Panc1 (cell line): ENCODE measurements at regions of chr1 and their contacts with region 1.

Region 1: GRCh38 chr1:97820470-97821188 is 100.2 kb downstream of the DPYD start:
- DNase-seq: peak; percentile 7
- ATAC-seq: no peak
- H3K4me3 ChIP-seq: no peak overlapping the region
- H3K27ac ChIP-seq: no peak overlapping the region
- H3K4me1 ChIP-seq: no peaks in the 10 kb centered on the region
- H3K27me3 ChIP-seq: no peaks in the 10 kb centered on the region
- CTCF ChIP-seq: peak; percentile 42; the same call in 1 of the 2 replicates

Region 2: DNA sequence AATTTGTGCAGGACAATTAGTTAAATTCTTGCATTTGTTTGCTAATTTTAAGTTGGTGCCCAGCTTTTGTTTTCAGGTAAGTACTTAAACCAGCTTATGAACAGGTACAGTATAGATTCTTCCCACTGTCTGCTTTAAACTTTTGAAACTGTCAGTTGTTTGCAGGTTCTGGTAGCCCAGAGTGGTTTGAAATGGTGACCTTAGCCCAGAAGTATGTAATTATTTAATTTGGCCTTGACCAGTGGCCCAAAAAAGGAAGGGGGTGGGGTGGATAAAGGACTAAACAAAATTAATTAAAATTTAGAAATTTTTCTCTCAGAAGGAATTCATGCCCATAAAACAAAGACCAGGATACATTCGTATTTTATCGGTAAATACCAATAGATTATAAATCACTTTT is 1030.0 kb before region 1 on chr1:
- CTCF ChIA-PET with region 1: no interaction called
- POLR2A ChIA-PET with region 1: interaction called, 13 read pairs
- in situ Hi-C with region 1: no loop called
- intact Hi-C with region 1: no loop called
- DNase-seq: no peak
- ATAC-seq: no peak
- H3K4me3 ChIP-seq: no peak overlapping the region
- H3K27ac ChIP-seq: no peak overlapping the region
- H3K4me1 ChIP-seq: no peaks in the 10 kb centered on the region
- H3K27me3 ChIP-seq: no peaks in the 10 kb centered on the region
- CTCF ChIP-seq: no peak

Region 3: GRCh38 chr1:96808191-96808590 is 1012.4 kb before region 1 on chr1:
- CTCF ChIA-PET with region 1: no interaction called
- POLR2A ChIA-PET with region 1: interaction called, 13 read pairs
- in situ Hi-C with region 1: no loop called
- intact Hi-C with region 1: no loop called
- DNase-seq: no peak
- ATAC-seq: no peak
- H3K4me3 ChIP-seq: no peak overlapping the region
- H3K27ac ChIP-seq: no peak overlapping the region
- H3K4me1 ChIP-seq: no peaks in the 10 kb centered on the region
- H3K27me3 ChIP-seq: no peaks in the 10 kb centered on the region
- CTCF ChIP-seq: no peak

Region 4: GRCh38 chr1:98053471-98054366 is 233.1 kb after region 1 on chr1:
- CTCF ChIA-PET with region 1: no interaction called
- POLR2A ChIA-PET with region 1: no interaction called
- in situ Hi-C with region 1: no loop called
- intact Hi-C with region 1: loop called (anchors 10 kb)
- DNase-seq: no peak
- ATAC-seq: peak; percentile 99
- H3K4me3 ChIP-seq: peak overlapping the region; percentile 41 to 68
- H3K27ac ChIP-seq: peak overlapping the region; percentile 65
- H3K4me1 ChIP-seq: no peaks in the 10 kb centered on the region
- H3K27me3 ChIP-seq: no peaks in the 10 kb centered on the region
- CTCF ChIP-seq: peak; percentile 93